ENCODE measurements at regions of chr2 and their contacts with region 1.

Region 1: GRCh38 chr2:37832590-37833197 is 92.4 kb upstream of the RMDN2 start:
- DNase-seq: peak; percentile 86
- H3K4me3 Mint-ChIP-seq: no peak overlapping the region
- H3K27ac Mint-ChIP-seq: no peak overlapping the region
- H3K4me1 Mint-ChIP-seq: peaks cover 30% of the 10 kb centered on the region
- H3K27me3 Mint-ChIP-seq: no peaks in the 10 kb centered on the region

Region 2: DNA sequence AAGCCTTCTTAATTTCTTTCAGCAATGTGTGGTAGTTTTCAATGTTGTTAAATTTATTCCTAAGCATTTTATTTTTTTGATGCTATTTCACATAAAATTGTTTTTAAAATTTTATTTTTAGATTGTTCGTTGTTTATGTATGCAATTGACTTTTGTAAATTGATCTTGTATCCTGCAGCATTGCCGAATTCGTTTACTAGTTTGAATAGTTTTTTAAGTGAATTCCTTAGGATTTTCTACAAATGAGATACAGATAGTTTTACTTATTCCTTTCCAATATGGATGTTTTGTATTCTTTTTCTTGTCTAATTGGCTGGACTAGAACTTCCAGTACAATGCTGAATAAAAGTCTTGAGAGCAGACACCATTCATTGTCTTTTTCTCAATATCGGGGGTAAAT is 432.7 kb before region 1 on chr2:
- CTCF ChIA-PET with region 1: interaction called, 104 read pairs
- POLR2A ChIA-PET with region 1: interaction called, 3 read pairs
- intact Hi-C with region 1: loop called (anchors 1 kb)
- DNase-seq: no peak
- H3K4me3 Mint-ChIP-seq: no peak overlapping the region
- H3K27ac Mint-ChIP-seq: no peak overlapping the region
- H3K4me1 Mint-ChIP-seq: no peaks in the 10 kb centered on the region
- H3K27me3 Mint-ChIP-seq: peaks cover 1% of the 10 kb centered on the region

Region 3: GRCh38 chr2:37414470-37414949 is 418.2 kb before region 1 on chr2:
- CTCF ChIA-PET with region 1: interaction called, 123 read pairs
- POLR2A ChIA-PET with region 1: no interaction called
- intact Hi-C with region 1: loop called (anchors 1 kb)
- DNase-seq: no peak
- H3K4me3 Mint-ChIP-seq: no peak overlapping the region
- H3K27ac Mint-ChIP-seq: no peak overlapping the region
- H3K4me1 Mint-ChIP-seq: peaks cover 6% of the 10 kb centered on the region
- H3K27me3 Mint-ChIP-seq: no peaks in the 10 kb centered on the region

Region 4: GRCh38 chr2:37537316-37537715 is 295.4 kb before region 1 on chr2:
- CTCF ChIA-PET with region 1: interaction called, 6 read pairs
- POLR2A ChIA-PET with region 1: no interaction called
- intact Hi-C with region 1: loop called (anchors 5 kb)
- DNase-seq: no peak
- H3K4me3 Mint-ChIP-seq: no peak overlapping the region
- H3K27ac Mint-ChIP-seq: no peak overlapping the region
- H3K4me1 Mint-ChIP-seq: no peaks in the 10 kb centered on the region
- H3K27me3 Mint-ChIP-seq: peaks cover 1% of the 10 kb centered on the region

Region 5: GRCh38 chr2:37543999-37544557 is 288.6 kb before region 1 on chr2:
- CTCF ChIA-PET with region 1: interaction called, 13 read pairs
- POLR2A ChIA-PET with region 1: no interaction called
- intact Hi-C with region 1: loop called (anchors 5 kb)
- DNase-seq: no peak
- H3K4me3 Mint-ChIP-seq: no peak overlapping the region
- H3K27ac Mint-ChIP-seq: no peak overlapping the region
- H3K4me1 Mint-ChIP-seq: no peaks in the 10 kb centered on the region
- H3K27me3 Mint-ChIP-seq: no peaks in the 10 kb centered on the region

Region 6: DNA sequence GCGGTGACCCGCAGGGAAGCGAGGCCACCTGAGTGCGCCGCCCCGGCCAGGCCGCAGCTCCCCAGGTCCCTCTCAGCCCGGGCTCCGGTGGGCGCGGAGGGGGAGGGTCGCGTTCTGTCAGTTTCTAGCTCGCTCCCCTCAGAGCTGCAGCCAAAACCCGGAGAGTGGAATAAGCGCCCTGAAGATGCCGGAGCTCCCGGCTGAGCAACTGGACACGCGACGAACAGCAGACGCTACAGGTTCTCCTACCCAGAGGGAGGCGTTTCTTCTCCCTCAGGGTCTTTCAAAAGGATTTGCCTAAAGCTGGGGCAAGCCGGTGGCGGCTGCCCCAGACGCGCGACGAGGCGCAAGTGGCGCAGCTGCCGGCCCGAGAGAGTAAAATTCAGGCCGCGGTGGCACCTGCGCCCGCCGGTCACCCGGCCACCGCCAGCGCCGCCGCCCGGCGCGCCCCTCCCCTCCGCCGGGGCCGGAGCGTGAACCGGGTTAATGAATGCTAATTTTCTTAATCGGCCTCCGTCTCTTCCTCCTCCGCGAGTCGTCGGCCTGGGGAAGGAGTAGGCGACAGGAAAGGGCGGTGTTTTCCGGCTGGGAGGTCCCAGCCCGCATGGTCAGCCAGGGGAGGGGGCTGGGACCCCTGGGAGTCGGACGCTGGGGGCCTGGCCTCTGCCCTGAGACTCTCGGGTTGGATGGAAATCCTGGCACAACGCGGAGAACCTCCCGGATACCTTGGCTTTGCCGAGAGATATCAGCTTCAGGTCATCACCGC is 160.4 kb before region 1 on chr2:
- CTCF ChIA-PET with region 1: interaction called, 18 read pairs
- POLR2A ChIA-PET with region 1: interaction called, 4 read pairs
- intact Hi-C with region 1: loop called (anchors 5 kb)
- DNase-seq: peak; percentile 78
- H3K4me3 Mint-ChIP-seq: peak overlapping the region; percentile 95
- H3K27ac Mint-ChIP-seq: peak overlapping the region; percentile 80
- H3K4me1 Mint-ChIP-seq: peaks cover 39% of the 10 kb centered on the region
- H3K27me3 Mint-ChIP-seq: no peaks in the 10 kb centered on the region

Region 7: GRCh38 chr2:37851828-37852584 is 19.3 kb after region 1 on chr2:
- CTCF ChIA-PET with region 1: interaction called, 14 read pairs
- POLR2A ChIA-PET with region 1: interaction called, 3 read pairs
- intact Hi-C with region 1: no loop called
- DNase-seq: no peak
- H3K4me3 Mint-ChIP-seq: peak overlapping the region; percentile 21
- H3K27ac Mint-ChIP-seq: peak overlapping the region; percentile 83
- H3K4me1 Mint-ChIP-seq: peaks cover 22% of the 10 kb centered on the region
- H3K27me3 Mint-ChIP-seq: no peaks in the 10 kb centered on the region

Measured in activated CD4-positive, alpha-beta memory T cell treated with anti-CD3 and anti-CD28 coated beads for 36 hours (primary cell).